GM12878 (cell line): ENCODE measurements at regions of chrX and their contacts with region 1.

Region 1: DNA sequence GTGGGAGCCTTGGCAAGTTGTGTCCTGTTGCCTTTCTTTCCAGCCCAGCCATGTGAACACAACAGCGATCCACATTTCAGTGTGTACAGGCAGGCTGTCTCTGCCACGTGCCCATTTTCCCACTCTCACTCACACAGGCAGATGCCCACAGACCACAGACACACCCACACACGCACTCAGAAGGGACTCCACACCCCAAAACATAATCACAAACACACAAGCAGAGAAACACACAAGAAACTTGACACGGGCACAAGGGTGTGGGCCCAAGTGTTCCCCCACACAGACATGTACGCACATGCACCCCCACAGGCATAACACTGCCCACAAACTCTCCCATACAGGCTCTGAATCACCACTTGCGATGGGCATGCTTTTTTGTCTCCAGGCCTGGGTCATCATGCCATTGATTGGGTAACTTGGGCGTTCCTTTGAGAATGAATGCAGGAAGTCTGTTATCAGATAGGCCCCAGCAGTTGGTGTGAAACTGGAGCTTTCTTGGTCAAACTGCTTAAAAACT is 84.3 kb downstream of the NBDY start:
- DNase-seq: no peak
- ATAC-seq: peak; percentile 78
- H3K4me3 ChIP-seq: peak overlapping the region; percentile 42; the same call in 1 of the 2 replicates
- H3K27ac ChIP-seq: peak overlapping the region; percentile 76
- H3K4me1 ChIP-seq: peaks cover 8% of the 10 kb centered on the region
- H3K27me3 ChIP-seq: no peaks in the 10 kb centered on the region
- CTCF ChIP-seq: no peak
- EP300 ChIP-seq: no peak
- POLR2A ChIP-seq: no peak
- RAD21 ChIP-seq: no peak

Region 2: DNA sequence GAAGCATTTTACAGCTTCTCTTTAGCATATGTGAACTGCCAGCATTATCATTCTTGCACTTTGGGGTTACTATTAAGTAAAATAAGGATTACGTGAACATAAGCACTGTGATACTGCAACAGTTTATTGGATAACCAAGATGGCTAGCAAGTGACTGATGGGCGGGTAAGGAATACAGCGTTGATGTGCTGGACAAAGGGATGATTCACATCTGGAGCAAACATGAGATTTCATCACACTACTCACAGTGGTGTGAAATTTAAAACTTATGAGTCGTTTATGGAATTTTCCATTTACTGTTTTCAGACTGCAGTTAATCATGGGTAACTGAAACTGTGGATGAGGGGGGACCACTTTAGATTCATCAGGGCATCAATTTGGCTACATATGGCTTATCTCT is 68.4 kb before region 1 on chrX:
- CTCF ChIA-PET with region 1: no interaction called
- POLR2A ChIA-PET with region 1: no interaction called
- RAD21 ChIA-PET with region 1: no interaction called
- SMC1A ChIA-PET with region 1: no interaction called
- in situ Hi-C with region 1: no loop called
- intact Hi-C with region 1: loop called (anchors 5 kb)
- DNase-seq: no peak
- ATAC-seq: no peak
- H3K4me3 ChIP-seq: no peak overlapping the region
- H3K27ac ChIP-seq: no peak overlapping the region
- H3K4me1 ChIP-seq: no peaks in the 10 kb centered on the region
- H3K27me3 ChIP-seq: no peaks in the 10 kb centered on the region; a peak in 1 of 4 replicates
- CTCF ChIP-seq: no peak
- EP300 ChIP-seq: no peak
- POLR2A ChIP-seq: no peak
- RAD21 ChIP-seq: no peak

Region 3: DNA sequence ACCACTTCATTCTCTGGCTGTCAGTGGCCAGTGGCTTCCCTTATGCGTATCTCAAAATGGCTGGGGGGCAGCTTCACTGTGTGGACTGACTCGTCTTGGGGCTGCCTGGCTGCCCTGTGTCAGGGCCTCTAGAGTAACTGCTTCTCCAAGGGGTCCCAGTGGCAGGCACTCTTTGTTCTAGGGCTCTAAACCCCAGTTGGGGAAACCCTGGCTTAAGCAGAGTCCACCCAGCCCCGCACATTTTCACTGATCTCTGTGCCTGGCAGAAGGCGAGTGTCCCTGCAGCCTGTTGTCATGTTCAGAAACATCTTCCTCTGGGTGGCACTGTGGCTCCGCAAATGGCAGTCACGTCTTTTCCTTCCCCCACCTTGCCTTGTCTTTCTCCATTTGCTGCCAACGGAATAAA is 24.7 kb before region 1 on chrX:
- CTCF ChIA-PET with region 1: no interaction called
- POLR2A ChIA-PET with region 1: no interaction called
- RAD21 ChIA-PET with region 1: no interaction called
- SMC1A ChIA-PET with region 1: no interaction called
- in situ Hi-C with region 1: no loop called
- intact Hi-C with region 1: no loop called
- DNase-seq: no peak
- ATAC-seq: peak; percentile 75
- H3K4me3 ChIP-seq: no peak overlapping the region
- H3K27ac ChIP-seq: no peak overlapping the region
- H3K4me1 ChIP-seq: no peaks in the 10 kb centered on the region
- H3K27me3 ChIP-seq: no peaks in the 10 kb centered on the region
- CTCF ChIP-seq: peak; percentile 17 to 69 (median 25); a peak in 4 of 6 replicates
- EP300 ChIP-seq: no peak
- POLR2A ChIP-seq: no peak
- RAD21 ChIP-seq: peak; percentile 27; the same call in 1 of the 2 replicates